ENCODE measurements at regions of chr10 and their contacts with region 1.

Region 1: GRCh38 chr10:28250782-28251181 is 52.1 kb downstream of the MPP7 start:
- DNase-seq: no peak
- H3K4me3 Mint-ChIP-seq: no peak overlapping the region
- H3K27ac Mint-ChIP-seq: no peak overlapping the region
- H3K4me1 Mint-ChIP-seq: peaks cover 2% of the 10 kb centered on the region
- H3K27me3 Mint-ChIP-seq: no peaks in the 10 kb centered on the region

Region 2: GRCh38 chr10:28317760-28318159 is 67.0 kb after region 1 on chr10:
- CTCF ChIA-PET with region 1: no interaction called
- POLR2A ChIA-PET with region 1: no interaction called
- DNase-seq: no peak
- H3K4me3 Mint-ChIP-seq: no peak overlapping the region
- H3K27ac Mint-ChIP-seq: no peak overlapping the region
- H3K4me1 Mint-ChIP-seq: no peaks in the 10 kb centered on the region
- H3K27me3 Mint-ChIP-seq: no peaks in the 10 kb centered on the region

Region 3: DNA sequence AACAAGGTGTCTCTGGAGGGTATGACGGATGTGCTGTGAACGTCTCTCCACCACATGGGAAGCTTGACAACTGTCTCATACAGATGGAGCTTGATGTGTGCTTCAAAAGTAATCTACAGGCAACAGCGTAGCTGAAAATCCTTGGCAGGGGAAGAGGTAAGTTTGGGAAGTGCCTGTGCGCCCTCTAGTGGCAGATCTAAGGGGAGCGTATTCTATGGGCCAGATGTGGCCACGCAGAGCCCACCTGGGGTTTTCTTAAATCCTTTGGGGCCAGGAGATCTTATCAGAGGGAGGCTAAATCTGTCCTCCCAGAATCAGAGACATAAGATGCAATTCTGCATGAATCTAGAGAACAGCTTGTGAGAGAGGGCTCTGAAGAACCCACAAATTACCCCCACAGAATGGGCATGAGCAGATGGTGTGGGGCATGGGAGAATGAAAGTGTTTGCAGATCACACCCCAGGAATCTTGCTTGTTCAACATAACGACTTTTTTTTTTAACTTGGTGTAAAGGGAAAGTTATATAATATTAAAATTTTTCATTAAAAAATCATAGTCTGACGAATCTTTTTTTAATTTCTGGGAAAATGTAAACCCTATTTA is 143.3 kb after region 1 on chr10:
- CTCF ChIA-PET with region 1: interaction called, 15 read pairs
- POLR2A ChIA-PET with region 1: interaction called, 4 read pairs
- DNase-seq: peak; percentile 66
- H3K4me3 Mint-ChIP-seq: no peak overlapping the region
- H3K27ac Mint-ChIP-seq: no peak overlapping the region
- H3K4me1 Mint-ChIP-seq: peaks cover 4% of the 10 kb centered on the region
- H3K27me3 Mint-ChIP-seq: peaks cover 5% of the 10 kb centered on the region